GM12878 (cell line): ENCODE measurements at regions of chr3 and their contacts with region 1.

Region 1: DNA sequence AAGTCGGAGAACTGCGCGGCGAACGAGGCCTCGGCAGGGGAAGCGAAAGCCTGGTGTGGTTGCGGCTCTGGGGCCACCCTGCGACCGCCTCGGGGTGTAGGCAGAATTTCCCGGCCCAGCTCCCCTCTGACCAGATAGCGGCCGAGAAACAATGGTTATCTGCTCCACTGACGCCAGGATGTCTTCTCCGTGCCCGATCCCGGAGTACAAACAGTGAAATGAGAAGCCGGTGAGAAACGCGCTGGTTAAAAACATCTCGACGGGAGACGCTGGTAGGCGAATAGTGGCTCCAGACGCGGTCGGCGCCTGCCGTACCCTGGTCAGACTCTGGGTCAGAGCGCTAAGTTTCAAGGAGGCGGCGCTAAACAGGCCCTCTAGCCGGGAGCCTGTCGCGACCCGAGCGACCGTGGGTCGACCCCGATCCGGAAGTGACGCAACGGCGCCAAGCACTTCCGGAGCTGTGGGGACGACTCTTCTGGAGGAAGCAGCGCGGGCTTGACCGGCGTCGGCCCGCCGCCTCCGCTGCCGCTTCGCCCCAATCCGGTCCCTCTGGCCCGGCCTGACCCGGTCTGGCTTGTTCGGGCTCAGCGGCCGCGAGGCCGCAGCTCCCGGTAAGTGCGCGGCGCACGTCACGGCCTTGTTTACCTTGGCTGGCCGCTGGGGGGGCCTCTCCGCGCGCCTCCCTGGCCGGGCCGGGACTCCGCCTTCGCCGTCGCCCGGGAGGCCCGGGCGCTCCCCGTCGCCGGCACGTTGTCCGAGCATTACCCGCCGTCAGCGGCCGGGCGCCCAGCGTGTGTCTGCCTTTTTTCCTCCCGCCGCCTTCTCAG is at the start of gene ARIH2:
- DNase-seq: peak; percentile 73
- ATAC-seq: peak; percentile 86
- H3K4me3 ChIP-seq: peak within 1 kb of the TSS; percentile 76
- H3K27ac ChIP-seq: peak within 1 kb of the TSS; percentile 94
- H3K4me1 ChIP-seq: peaks cover 5% of the 10 kb centered on the region
- H3K27me3 ChIP-seq: no peaks in the 10 kb centered on the region
- CTCF ChIP-seq: peak; percentile 7 to 49 (median 11); a peak in 3 of 6 replicates
- EP300 ChIP-seq: peak; percentile 71 to 76
- POLR2A ChIP-seq: peak; percentile 83
- RAD21 ChIP-seq: peak; percentile 51
- polyA plus RNA-seq, gene ARIH2: 18.7 to 22.2 TPM

Region 2: DNA sequence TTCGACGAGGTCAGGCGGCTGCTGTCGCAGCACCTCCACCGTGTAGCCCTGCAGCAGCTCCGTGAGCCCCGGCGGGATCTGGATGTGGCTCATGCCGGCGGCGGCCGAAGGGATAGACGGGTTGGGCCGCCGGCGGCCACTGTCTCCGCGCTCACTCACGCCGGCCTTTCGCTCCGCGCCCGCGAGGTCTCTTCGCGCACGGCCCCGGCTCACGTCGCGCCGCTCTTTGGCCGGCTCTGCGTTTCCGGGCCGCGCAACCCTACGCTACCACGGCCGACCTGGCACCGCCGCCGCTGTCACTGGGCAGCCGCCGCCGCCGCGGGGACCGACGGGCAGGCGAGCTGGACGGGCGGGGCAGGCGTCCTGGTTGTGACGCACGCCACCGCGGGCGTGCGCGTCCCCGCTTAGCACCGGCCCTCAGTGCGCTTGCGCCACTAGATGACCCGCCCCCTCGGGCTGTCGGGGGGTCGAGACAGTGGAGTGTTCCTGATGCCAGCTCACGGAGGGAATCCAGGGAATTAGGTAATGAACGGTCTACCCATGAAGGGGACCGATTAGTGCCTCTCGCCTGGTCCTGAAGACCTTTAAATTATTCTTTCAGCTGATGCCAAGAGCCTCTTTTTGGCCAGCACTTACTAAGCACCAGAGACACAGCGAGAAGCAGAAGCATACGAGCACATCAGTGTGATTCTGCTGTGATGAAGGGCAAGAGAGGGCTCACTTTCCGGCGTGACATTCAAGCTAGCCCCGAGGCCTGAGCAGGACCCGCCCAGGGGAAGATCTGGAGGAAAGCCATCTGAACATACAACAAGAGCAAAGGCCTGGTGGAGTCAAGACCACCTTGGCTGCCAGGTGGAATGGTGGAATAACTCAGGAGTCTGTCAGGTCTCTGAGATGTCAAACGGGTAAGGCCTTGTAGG is 70.8 kb before region 1 on chr3 and contains the start of gene PRKAR2A:
- CTCF ChIA-PET with region 1: no interaction called
- POLR2A ChIA-PET with region 1: interaction called, 5 read pairs
- RAD21 ChIA-PET with region 1: interaction called, 8 read pairs
- SMC1A ChIA-PET with region 1: no interaction called
- in situ Hi-C with region 1: no loop called
- intact Hi-C with region 1: loop called (anchors 2 kb)
- DNase-seq: peak; percentile 62
- ATAC-seq: peak; percentile 97
- H3K4me3 ChIP-seq: peak within 1 kb of the TSS; percentile 81
- H3K27ac ChIP-seq: peak within 1 kb of the TSS; percentile 64
- H3K4me1 ChIP-seq: peaks cover 8% of the 10 kb centered on the region
- H3K27me3 ChIP-seq: no peaks in the 10 kb centered on the region
- CTCF ChIP-seq: no peak
- EP300 ChIP-seq: no peak
- POLR2A ChIP-seq: peak; percentile 81
- RAD21 ChIP-seq: no peak
- polyA plus RNA-seq, gene PRKAR2A: 9.8 to 11.1 TPM

Region 3: GRCh38 chr3:49057268-49057667 is 138.7 kb after region 1 on chr3:
- CTCF ChIA-PET with region 1: no interaction called
- POLR2A ChIA-PET with region 1: no interaction called
- RAD21 ChIA-PET with region 1: no interaction called
- SMC1A ChIA-PET with region 1: no interaction called
- in situ Hi-C with region 1: no loop called
- intact Hi-C with region 1: no loop called
- DNase-seq: no peak
- ATAC-seq: no peak
- H3K4me3 ChIP-seq: no peak overlapping the region
- H3K27ac ChIP-seq: no peak overlapping the region
- H3K4me1 ChIP-seq: no peaks in the 10 kb centered on the region
- H3K27me3 ChIP-seq: no peaks in the 10 kb centered on the region
- CTCF ChIP-seq: no peak
- EP300 ChIP-seq: no peak
- POLR2A ChIP-seq: peak; percentile 52
- RAD21 ChIP-seq: no peak